A673 (cell line): ENCODE measurements at regions of chr1 and their contacts with region 1.

Region 1: GRCh38 chr1:30801771-30802198 is 44.2 kb upstream of the LAPTM5 start:
- DNase-seq: peak; percentile 84
- H3K4me3 ChIP-seq: no peak overlapping the region
- H3K27ac ChIP-seq: no peak overlapping the region
- H3K4me1 ChIP-seq: peaks cover 4% of the 10 kb centered on the region
- H3K27me3 ChIP-seq: peaks cover 7% of the 10 kb centered on the region
- CTCF ChIP-seq: peak; percentile 96

Region 2: GRCh38 chr1:30929135-30929889 is 127.5 kb after region 1 on chr1:
- CTCF ChIA-PET with region 1: interaction called, 14 read pairs
- POLR2A ChIA-PET with region 1: no interaction called
- intact Hi-C with region 1: no loop called
- DNase-seq: peak; percentile 61
- H3K4me3 ChIP-seq: no peak overlapping the region
- H3K27ac ChIP-seq: no peak overlapping the region
- H3K4me1 ChIP-seq: no peaks in the 10 kb centered on the region
- H3K27me3 ChIP-seq: no peaks in the 10 kb centered on the region
- CTCF ChIP-seq: peak; percentile 75